ENCODE measurements at regions of chr22 and their contacts with region 1.

Region 1: GRCh38 chr22:46971141-46972091 is 209.0 kb downstream of the TBC1D22A start:
- DNase-seq: peak; percentile 70
- H3K4me3 ChIP-seq: no peak overlapping the region
- H3K27ac ChIP-seq: peak overlapping the region in 3 of 4 donors; percentile 35 to 57 (median 42)
- H3K4me1 ChIP-seq: peaks cover 0 to 10% (median 0%) of the 10 kb centered on the region in 4 donors
- H3K27me3 ChIP-seq: no peaks in the 10 kb centered on the region
- CTCF ChIP-seq: no peak
- EP300 ChIP-seq: no peak
- POLR2A ChIP-seq: no peak

Region 2: DNA sequence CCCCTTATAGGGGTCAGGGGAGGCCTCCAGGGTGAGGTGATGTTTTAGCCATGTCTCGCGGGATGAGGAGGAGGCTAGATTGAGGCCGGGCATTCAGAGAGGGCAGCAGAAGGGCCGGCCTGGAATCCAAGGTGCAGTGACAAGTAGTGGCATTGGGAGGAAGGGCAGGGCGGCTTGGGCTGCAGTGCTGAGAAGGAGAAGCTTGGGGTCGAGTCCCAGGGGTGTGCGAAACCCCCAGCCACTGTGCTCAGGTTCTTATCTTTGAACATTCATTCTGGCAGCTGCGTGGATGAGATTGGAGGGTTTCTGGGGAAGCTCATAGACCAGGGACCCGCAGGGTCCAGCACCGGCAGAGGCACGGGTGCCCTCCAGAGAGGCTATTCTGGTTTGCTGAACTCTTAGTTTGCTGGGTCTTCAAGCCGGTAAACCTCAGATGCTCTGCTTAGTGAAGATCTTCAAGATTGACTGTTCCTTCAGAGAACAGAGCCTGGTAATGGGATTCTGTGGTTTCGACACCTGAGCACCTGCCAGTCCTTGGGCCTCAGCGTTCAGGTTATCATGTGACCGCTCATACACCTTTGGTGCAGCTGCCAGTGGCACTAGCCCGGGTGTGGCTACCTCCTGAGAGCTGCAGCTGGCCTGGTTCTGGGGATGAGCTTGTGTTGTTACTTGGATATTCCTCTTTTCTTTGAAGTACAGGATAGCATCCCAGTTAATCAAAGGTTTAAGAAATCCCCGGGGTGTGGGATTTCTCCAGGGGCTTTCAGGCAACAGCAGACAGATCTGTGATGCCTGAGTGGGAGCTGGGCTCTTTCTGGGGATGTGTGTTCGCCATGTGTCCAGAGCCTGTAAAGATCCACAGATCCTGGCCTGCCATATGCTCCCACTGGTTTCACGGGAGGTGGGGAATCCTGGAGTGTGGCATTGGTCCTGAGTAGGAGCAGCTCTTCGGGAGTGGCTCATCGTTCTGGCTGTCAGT is 56.2 kb before region 1 on chr22:
- intact Hi-C with region 1: loop called (anchors 5 kb)
- DNase-seq: no peak
- H3K4me3 ChIP-seq: no peak overlapping the region
- H3K27ac ChIP-seq: no peak overlapping the region
- H3K4me1 ChIP-seq: no peaks in the 10 kb centered on the region
- H3K27me3 ChIP-seq: no peaks in the 10 kb centered on the region
- CTCF ChIP-seq: no peak
- EP300 ChIP-seq: no peak
- POLR2A ChIP-seq: no peak

Measured in sigmoid colon (tissue), 7 donors.